ENCODE measurements at regions of chr7 and their contacts with region 1.

Region 1: DNA sequence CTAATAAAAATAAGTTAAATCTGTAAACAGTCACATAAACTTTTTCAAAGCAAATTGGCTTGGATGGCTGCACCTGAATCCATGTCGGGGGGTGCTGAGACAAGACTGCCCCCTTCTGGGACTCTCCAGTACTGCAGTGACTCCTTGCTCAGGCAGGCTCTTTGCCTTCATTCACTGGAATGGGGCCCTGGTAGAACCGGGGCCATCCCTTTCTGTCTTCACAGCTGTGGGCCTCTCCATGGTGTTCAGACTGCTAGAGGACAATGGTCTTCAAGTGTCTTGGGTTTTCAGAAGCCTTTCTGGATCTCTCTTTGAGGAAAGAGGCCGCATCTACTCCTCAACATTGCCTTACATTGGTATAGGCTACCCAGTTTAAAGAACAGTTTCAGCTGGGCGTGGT is 16.1 kb upstream of the IMPDH1 start:
- DNase-seq: peak; percentile 48 to 80 (median 70)
- ATAC-seq: peak; percentile 44
- H3K4me3 ChIP-seq: no peak overlapping the region
- H3K27ac ChIP-seq: no peak overlapping the region
- H3K4me1 ChIP-seq: no peaks in the 10 kb centered on the region
- H3K27me3 ChIP-seq: no peaks in the 10 kb centered on the region
- CTCF ChIP-seq: peak; percentile 50 to 82 (median 63)
- POLR2A ChIP-seq: no peak

Region 2: DNA sequence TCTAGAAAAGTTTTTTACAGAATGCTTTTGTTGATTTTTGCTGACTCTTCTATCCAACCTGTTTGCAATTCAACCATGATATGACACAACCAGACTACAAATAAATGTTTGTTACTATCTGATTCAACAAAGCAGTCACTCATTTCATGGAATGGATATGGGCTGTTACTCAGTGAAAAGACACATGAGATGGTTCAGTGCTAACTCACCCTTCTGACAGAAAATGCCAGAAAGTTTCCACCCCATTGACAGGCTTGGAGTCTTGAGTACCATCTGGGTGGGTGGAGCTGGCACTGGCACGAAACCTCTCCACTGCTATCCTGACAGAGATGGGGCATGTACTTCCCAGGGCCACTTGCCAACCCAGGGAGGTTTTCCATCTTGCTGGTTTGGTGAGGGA is 121.6 kb before region 1 on chr7:
- intact Hi-C with region 1: no loop called
- DNase-seq: no peak
- ATAC-seq: no peak
- H3K4me3 ChIP-seq: no peak overlapping the region
- H3K27ac ChIP-seq: no peak overlapping the region
- H3K4me1 ChIP-seq: no peaks in the 10 kb centered on the region
- H3K27me3 ChIP-seq: no peaks in the 10 kb centered on the region
- CTCF ChIP-seq: no peak
- POLR2A ChIP-seq: no peak

Region 3: DNA sequence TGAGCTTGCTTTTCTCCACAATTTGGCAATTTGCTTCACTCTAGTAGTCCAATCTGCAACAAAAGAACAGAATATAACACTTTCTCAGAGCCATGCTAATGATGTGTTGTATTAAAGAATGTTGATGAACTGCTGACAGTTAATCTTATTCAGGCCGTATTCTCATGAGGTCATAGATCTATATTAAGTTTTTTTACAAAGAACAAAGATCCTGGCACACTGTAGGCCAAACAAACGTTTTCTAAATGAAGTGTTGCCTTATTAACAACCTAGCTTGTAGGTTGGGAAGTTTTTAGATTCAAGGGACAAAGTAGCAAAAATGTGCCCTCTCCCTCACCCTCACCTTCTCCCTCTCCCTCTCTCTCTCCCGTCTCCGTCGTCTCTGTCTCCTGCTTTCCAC is 36.6 kb after region 1 on chr7:
- intact Hi-C with region 1: loop called (anchors 5 kb)
- DNase-seq: no peak
- ATAC-seq: no peak
- H3K4me3 ChIP-seq: no peak overlapping the region
- H3K27ac ChIP-seq: no peak overlapping the region
- H3K4me1 ChIP-seq: peaks cover 23% of the 10 kb centered on the region
- H3K27me3 ChIP-seq: no peaks in the 10 kb centered on the region
- CTCF ChIP-seq: no peak
- POLR2A ChIP-seq: no peak